Activated CD4-positive, alpha-beta memory T cell treated with anti-CD3 and anti-CD28 coated beads for 36 hours (primary cell): ENCODE measurements at regions of chr1 and their contacts with region 1.

Region 1: DNA sequence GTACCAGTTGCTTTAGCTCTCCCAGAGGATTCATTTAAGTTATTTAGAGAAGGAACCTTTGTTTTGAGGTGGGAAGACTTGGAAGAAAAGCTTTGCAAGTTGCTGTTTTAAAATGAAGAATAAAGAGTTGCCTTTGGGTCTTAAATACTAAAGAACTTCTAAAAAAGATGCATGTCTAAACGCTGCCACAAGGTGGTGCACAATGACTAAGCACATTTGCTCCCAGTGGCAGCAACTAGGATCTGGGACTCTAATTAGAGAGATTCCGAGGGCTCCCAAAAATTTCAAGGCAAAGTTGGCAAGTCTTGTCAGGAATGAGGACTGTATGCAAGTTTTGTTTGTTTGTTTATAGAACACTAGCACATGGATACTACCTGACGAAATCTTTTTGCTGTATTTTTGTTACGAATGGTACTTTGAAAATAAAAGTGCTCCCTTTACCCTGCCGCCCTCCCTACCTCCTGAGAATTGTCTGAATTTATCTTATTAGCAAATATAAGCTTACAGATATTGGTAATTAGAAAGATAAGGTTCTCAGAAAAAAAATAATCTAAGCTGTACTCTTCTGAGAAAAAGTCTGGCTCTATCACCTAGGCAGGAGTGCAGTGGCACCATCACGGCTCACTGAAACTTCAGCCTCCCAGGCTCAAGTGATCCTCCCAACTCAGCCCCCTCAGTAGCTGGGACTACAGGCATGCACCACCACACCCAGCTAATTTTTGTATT is 121.8 kb downstream of the HFM1 start:
- DNase-seq: peak; percentile 38
- H3K4me3 Mint-ChIP-seq: no peak overlapping the region
- H3K27ac Mint-ChIP-seq: no peak overlapping the region
- H3K4me1 Mint-ChIP-seq: no peaks in the 10 kb centered on the region
- H3K27me3 Mint-ChIP-seq: peaks cover 2% of the 10 kb centered on the region

Region 2: DNA sequence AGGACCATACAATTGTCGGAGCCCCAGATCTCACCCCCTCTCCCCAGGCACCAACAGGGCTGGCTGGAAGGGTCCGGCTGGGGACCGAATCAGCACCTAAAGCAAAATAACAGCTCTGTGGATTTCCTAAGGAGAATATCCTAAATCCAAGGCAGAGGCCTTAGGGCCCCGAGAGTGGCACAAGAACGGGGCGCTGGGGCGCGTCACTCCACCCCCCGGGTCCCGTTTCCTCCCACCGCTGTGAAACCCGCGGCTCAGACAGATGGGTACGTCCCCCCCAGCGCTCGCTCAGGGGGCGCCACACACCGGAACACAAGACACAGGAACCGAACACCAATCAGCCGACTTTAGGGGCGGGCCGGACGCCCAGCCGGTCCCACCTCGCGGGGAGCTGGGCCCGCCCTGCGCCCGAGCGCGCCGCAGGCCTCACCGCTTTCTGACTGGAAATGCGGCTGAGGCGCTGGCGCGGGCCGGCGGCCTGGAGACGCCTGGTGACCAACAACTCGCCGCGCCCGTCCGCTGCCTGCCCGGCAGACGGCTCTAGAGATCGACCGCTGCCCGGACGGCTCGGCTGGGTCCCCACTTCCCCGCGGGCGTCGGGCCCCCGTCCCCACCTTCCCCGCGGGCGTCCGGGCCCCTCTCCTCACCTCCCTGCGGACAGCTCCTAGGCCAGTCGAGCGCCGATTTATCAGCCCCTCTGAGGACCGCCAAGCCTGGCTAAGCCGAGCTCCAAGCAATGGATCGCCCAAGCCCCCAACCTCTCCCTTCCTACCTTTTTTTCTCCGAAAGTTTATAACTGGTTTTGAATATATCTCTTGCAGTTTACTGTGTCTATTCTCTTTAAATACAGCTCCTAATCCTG is 121.5 kb after region 1 on chr1 and contains the start of gene HFM1:
- CTCF ChIA-PET with region 1: interaction called, 5 read pairs
- POLR2A ChIA-PET with region 1: no interaction called
- intact Hi-C with region 1: loop called (anchors 1 kb)
- DNase-seq: peak; percentile 50
- H3K4me3 Mint-ChIP-seq: peak within 1 kb of the TSS; percentile 55
- H3K27ac Mint-ChIP-seq: no peak within 1 kb of the TSS
- H3K4me1 Mint-ChIP-seq: peaks cover 4% of the 10 kb centered on the region
- H3K27me3 Mint-ChIP-seq: peaks cover 37% of the 10 kb centered on the region
- total RNA-seq, gene HFM1: not detected

Region 3: DNA sequence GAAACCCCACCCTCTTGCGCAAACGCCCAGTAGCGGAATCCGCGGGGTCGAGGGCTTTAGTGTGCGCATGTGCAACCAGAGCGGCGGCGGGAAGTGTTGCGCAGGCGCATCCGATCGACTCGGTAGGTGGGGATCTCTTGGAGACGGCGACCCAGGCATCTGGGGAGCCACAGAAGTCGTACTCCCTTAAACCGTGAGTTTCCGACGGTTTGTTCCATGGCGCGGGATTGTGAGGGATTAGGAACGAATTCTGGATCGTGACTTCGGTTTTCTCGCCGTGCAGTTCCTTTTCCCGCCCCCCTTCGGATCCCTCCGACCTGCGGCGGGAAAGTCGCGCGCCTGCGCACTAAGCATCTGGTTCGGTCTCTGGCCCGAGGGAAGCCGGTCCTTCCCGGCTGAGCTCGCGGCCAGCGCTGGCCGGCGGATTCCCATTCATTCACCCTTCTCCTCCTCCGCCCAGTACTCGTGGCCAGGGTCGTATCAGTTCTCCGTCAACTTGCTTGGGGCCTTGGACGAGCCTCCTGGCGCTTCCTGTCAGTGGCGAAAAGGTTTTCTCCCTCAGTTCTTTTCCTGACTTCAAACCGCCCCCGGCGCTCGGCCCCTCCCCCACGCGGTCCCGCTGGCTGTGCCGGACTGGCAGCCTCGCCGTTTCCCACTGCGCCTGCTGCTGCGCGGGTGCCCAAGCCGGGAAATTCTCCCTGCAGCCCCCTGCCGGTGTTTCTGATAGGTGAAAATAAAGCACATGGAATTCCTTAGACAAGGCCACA is 218.1 kb after region 1 on chr1 and contains the start of gene CDC7:
- CTCF ChIA-PET with region 1: interaction called, 4 read pairs
- POLR2A ChIA-PET with region 1: no interaction called
- intact Hi-C with region 1: loop called (anchors 5 kb)
- DNase-seq: peak; percentile 88
- H3K4me3 Mint-ChIP-seq: no peak within 1 kb of the TSS
- H3K27ac Mint-ChIP-seq: no peak within 1 kb of the TSS
- H3K4me1 Mint-ChIP-seq: peaks cover 16% of the 10 kb centered on the region
- H3K27me3 Mint-ChIP-seq: no peaks in the 10 kb centered on the region
- total RNA-seq, gene CDC7: 20.2 to 20.4 TPM

Region 4: GRCh38 chr1:91924146-91924545 is 641.3 kb after region 1 on chr1:
- CTCF ChIA-PET with region 1: interaction called, 22 read pairs
- POLR2A ChIA-PET with region 1: no interaction called
- intact Hi-C with region 1: loop called (anchors 1 kb)
- DNase-seq: no peak
- H3K4me3 Mint-ChIP-seq: no peak overlapping the region
- H3K27ac Mint-ChIP-seq: no peak overlapping the region
- H3K4me1 Mint-ChIP-seq: peaks cover 7% of the 10 kb centered on the region
- H3K27me3 Mint-ChIP-seq: no peaks in the 10 kb centered on the region

Region 5: GRCh38 chr1:91929250-91929649 is 646.4 kb after region 1 on chr1:
- CTCF ChIA-PET with region 1: interaction called, 22 read pairs
- POLR2A ChIA-PET with region 1: no interaction called
- intact Hi-C with region 1: loop called (anchors 1 kb)
- DNase-seq: no peak
- H3K4me3 Mint-ChIP-seq: no peak overlapping the region
- H3K27ac Mint-ChIP-seq: no peak overlapping the region
- H3K4me1 Mint-ChIP-seq: peaks cover under 1% of the 10 kb centered on the region
- H3K27me3 Mint-ChIP-seq: no peaks in the 10 kb centered on the region